HepG2 (cell line): ENCODE measurements at regions of chr9 and their contacts with region 1.

Region 1: DNA sequence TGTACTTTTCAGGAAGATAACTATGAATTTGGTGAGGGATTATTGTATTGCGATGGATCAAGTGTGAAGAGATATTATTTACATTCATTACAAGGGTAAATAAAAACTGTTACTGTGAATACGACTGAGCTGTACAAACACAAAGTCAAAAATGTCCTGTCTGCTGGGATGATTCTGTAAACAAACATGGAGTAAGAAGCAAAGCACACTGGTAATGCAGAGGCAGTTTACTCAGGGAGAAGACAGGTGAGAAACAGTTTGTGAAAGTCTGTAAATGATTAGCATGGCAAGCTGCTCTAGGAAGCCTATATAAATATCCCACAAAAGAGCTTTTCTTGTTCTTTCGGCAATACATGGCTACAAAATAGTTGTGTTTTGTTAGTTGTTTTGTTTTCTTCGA is 115.4 kb upstream of the GNA14 start:
- DNase-seq: peak; percentile 82
- ATAC-seq: peak; percentile 99
- H3K4me3 ChIP-seq: no peak overlapping the region
- H3K27ac ChIP-seq: peak overlapping the region; percentile 7
- H3K4me1 ChIP-seq: peaks cover 28% of the 10 kb centered on the region
- H3K27me3 ChIP-seq: no peaks in the 10 kb centered on the region
- CTCF ChIP-seq: no peak
- EP300 ChIP-seq: peak in 1 of 2 experiments; percentile 65; a peak in 2 of 4 replicates
- POLR2A ChIP-seq: no peak
- RAD21 ChIP-seq: no peak

Region 2: DNA sequence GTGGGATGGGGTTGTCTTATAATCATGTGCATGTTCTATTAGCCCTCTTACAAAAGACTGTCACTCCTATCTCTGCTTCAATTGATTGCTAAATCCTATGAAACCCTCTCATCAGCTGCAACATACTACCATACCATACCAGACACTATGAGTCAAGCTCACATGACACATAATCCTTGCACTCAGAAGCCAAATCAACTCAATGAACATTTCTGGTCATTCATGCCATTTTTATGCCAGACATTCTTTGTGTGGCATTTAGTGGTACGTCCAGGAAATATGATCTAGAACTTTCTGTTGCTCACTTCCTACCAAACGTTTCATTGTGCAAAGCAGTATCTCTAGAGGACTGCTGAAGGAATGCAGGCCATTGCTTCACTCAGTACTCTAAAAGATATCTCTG is 43.7 kb after region 1 on chr9:
- CTCF ChIA-PET with region 1: no interaction called
- POLR2A ChIA-PET with region 1: interaction called, 4 read pairs
- in situ Hi-C with region 1: no loop called
- intact Hi-C with region 1: loop called (anchors 2 kb)
- DNase-seq: peak; percentile 84
- ATAC-seq: peak; percentile 60
- H3K4me3 ChIP-seq: peak overlapping the region in 2 of 3 experiments; percentile 4 to 34; a peak in 1 of 6 replicates
- H3K27ac ChIP-seq: peak overlapping the region; percentile 93
- H3K4me1 ChIP-seq: peaks cover 58% of the 10 kb centered on the region
- H3K27me3 ChIP-seq: no peaks in the 10 kb centered on the region
- CTCF ChIP-seq: no peak
- EP300 ChIP-seq: peak in 1 of 2 experiments; percentile 23; a peak in 1 of 4 replicates
- POLR2A ChIP-seq: no peak
- RAD21 ChIP-seq: 0 out of 2 replicates have a peak, but pooled peaks have one; percentile 14

Region 3: DNA sequence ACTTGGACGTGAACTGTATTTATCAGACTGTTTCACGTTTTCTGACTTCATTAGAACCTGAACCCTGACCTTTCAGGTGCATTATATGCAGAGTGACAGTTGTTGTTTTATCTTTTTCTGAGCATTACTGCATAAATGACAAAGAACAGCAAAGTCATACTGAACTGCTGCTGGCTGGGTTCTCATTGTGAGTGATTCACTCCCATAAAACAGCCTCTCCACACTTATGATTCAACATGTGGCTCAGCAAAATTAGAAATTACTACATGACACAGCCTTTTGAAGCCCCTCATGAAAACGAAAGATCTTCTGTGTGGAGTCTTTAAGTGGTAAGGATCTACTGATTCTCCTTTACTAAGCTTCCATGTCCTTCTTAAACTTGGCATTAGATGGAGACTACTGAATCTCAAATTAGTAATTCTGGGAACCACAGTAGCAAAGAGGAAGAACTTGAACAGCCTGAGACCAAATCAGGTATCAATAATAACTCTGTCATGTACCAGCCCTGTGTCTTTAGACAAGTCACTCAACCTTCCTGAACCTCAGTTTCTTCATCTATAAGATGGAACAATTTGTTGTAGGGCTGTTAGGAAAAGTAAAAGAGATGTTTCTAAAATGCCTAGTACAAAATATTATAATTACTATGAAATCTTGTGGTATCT is 56.9 kb after region 1 on chr9:
- CTCF ChIA-PET with region 1: no interaction called
- POLR2A ChIA-PET with region 1: no interaction called
- in situ Hi-C with region 1: no loop called
- intact Hi-C with region 1: no loop called
- DNase-seq: no peak
- ATAC-seq: no peak
- H3K4me3 ChIP-seq: no peak overlapping the region
- H3K27ac ChIP-seq: no peak overlapping the region
- H3K4me1 ChIP-seq: no peaks in the 10 kb centered on the region
- H3K27me3 ChIP-seq: no peaks in the 10 kb centered on the region
- CTCF ChIP-seq: no peak
- EP300 ChIP-seq: no peak
- POLR2A ChIP-seq: no peak
- RAD21 ChIP-seq: no peak

Region 4: GRCh38 chr9:77839459-77840140 is 76.0 kb after region 1 on chr9:
- CTCF ChIA-PET with region 1: no interaction called
- POLR2A ChIA-PET with region 1: no interaction called
- in situ Hi-C with region 1: no loop called
- intact Hi-C with region 1: loop called (anchors 2 kb)
- DNase-seq: peak; percentile 50
- ATAC-seq: no peak
- H3K4me3 ChIP-seq: no peak overlapping the region
- H3K27ac ChIP-seq: no peak overlapping the region
- H3K4me1 ChIP-seq: peaks cover 18% of the 10 kb centered on the region
- H3K27me3 ChIP-seq: no peaks in the 10 kb centered on the region
- CTCF ChIP-seq: no peak
- EP300 ChIP-seq: 0 out of 4 replicates have a peak, but pooled peaks of 1 of the 2 experiments have one; percentile 7
- POLR2A ChIP-seq: no peak
- RAD21 ChIP-seq: no peak